ENCODE measurements at regions of chr1 and their contacts with region 1.

Region 1: GRCh38 chr1:203304919-203305808 is at the start of gene BTG2:
- DNase-seq: peak; percentile 93 to 95 (median 94)
- H3K4me3 ChIP-seq: peak within 1 kb of the TSS; percentile 68 to 100 (median 98)
- H3K27ac ChIP-seq: peak within 1 kb of the TSS; percentile 80 to 100 (median 99)
- H3K27me3 ChIP-seq: no peaks in the 10 kb centered on the region
- CTCF ChIP-seq: peak in 23 of 56 donors; percentile 5 to 49 (median 20)
- total RNA-seq, gene BTG2: 21.2 to 122 (median 33.4) TPM

Region 2: GRCh38 chr1:203084588-203085502 is 220.3 kb before region 1 on chr1:
- intact Hi-C with region 1: no loop called
- DNase-seq: peak in 2 of 10 donors; percentile 3 to 8
- H3K4me3 ChIP-seq: no peak overlapping the region
- H3K27ac ChIP-seq: no peak overlapping the region
- H3K27me3 ChIP-seq: no peaks in the 10 kb centered on the region
- CTCF ChIP-seq: peak in 25 of 56 donors; percentile 7 to 44 (median 22)

Region 3: DNA sequence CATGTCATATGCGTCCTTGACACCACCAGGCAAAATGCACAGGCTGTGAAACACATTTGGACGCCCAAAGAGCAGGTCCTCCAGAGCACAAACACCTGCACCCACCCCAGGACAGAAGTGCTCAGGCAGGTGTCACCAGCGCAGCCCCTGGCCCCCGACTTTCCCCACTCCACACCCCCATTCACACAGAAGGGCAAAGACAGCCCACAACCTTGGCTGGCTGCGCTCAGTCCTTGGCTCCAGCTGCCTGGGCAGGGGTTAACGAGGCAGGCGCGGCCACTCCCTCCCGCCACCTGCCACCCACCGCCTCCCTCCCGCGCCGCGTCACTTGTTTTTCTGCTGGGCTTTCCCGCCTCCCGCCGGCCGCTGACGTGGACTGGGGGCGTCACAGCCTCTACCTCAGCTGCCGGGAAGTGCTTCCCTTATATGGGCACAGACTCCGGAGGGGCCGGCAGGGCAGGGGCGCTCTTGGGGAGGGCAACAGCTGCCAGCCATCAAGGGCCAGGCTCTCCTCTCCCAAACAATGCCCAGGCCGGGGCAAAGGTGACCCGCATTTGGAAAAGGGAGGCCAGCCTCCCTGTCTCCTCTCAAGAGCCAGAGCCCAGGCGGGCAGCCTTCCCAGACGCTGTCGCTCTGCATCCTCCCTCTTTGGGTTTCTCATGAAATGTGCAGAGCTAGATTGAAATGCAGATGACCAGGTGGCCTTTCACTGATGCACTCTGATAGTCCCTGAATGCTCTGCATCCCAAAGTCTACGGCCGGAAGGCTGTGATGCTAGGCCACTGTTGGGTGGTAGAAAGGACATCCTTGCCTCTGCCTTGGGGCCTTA is 14.7 kb before region 1 on chr1:
- intact Hi-C with region 1: loop called in 1 of 2 experiments (anchors 1 kb)
- DNase-seq: peak; percentile 92 to 99 (median 95)
- H3K4me3 ChIP-seq: peak overlapping the region in 58 of 59 donors; percentile 3 to 61 (median 47)
- H3K27ac ChIP-seq: peak overlapping the region; percentile 87 to 100 (median 98)
- H3K27me3 ChIP-seq: no peaks in the 10 kb centered on the region
- CTCF ChIP-seq: peak in 16 of 56 donors; percentile 4 to 40 (median 14)

Region 4: DNA sequence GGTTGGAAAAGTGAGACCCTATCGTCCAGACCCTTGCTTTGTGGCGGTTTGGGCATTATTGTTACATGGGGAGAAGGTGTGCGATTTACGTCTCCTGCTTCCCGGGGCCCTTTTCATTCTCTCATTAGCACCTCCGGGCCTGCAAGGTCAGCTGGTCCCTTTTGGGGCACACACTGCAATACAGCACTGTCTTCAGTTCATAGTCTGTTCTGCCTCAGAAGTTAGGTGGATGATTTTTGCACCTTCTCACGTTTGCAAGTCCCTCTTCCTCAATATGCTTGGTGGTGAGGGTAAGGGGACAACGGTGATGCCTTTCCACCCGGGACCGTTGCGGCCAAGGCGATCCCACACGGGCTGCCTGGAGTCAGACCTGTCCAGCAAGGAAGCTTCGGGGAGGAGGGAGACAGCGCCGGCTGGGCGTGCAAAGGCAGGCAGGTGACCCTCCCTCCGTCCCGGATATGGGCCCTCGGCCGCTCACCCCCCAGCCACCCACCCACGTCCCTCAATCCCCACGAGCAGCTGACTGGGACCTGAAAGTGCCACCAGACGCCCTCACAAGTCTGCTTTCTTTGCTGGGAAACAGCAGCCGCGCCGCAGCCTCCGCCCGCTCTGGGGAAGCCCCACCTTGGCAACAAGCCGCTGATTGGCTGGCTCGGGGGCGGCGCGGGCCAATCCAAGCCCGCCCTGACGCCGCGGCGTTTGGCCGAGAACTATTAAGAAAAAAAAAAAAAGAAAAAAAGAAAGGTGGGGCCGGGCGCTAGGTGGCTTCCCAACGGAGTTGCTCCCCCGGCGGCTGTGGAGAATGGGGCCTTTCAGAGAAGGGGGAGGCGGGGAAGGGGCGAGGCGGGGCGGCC is 21.9 kb after region 1 on chr1:
- intact Hi-C with region 1: loop called (anchors 1 to 2 kb)
- DNase-seq: peak; percentile 87 to 96 (median 92)
- H3K4me3 ChIP-seq: peak overlapping the region; percentile 39 to 92 (median 66)
- H3K27ac ChIP-seq: peak overlapping the region; percentile 82 to 100 (median 95)
- H3K27me3 ChIP-seq: no peaks in the 10 kb centered on the region
- CTCF ChIP-seq: peak in 1 of 56 donors; percentile 1

Region 5: DNA sequence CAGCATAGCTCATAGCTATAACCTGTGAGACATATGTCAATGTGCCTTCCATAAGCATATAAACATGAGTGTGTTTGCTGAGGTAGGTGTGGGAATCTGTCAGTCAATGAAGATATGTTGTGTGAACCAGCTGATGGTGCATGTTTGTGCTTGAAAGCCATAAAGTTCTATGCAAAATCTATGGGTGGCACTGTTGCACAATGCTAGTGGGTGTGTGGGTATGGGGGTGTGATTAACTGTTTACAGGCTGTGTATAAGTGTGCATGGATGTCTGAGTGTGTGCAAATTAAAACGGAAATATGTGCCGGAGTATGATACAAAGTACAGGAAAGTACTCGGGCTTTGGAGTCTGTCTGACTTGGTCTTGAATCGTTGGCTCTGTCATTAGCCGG is 320.5 kb after region 1 on chr1:
- intact Hi-C with region 1: no loop called
- DNase-seq: peak in 3 of 10 donors; percentile 23 to 63 (median 56)
- H3K4me3 ChIP-seq: peak overlapping the region in 16 of 59 donors; percentile 6 to 90 (median 72)
- H3K27ac ChIP-seq: peak overlapping the region in 35 of 59 donors; percentile 1 to 90 (median 64)
- H3K27me3 ChIP-seq: no peaks in the 10 kb centered on the region
- CTCF ChIP-seq: peak; percentile 19 to 84 (median 69)

Region 6: GRCh38 chr1:203871107-203871875 is 566.1 kb after region 1 on chr1:
- intact Hi-C with region 1: no loop called
- DNase-seq: peak in 6 of 10 donors; percentile 17 to 57 (median 38)
- H3K4me3 ChIP-seq: peak overlapping the region in 5 of 59 donors; percentile 11 to 21 (median 12)
- H3K27ac ChIP-seq: peak overlapping the region in 57 of 59 donors; percentile 1 to 85 (median 69)
- H3K27me3 ChIP-seq: no peaks in the 10 kb centered on the region
- CTCF ChIP-seq: peak; percentile 77 to 98 (median 90)

Measured in dorsolateral prefrontal cortex (tissue), 120 donors.